ENCODE measurements at regions of chr19 and their contacts with region 1.

Region 1: DNA sequence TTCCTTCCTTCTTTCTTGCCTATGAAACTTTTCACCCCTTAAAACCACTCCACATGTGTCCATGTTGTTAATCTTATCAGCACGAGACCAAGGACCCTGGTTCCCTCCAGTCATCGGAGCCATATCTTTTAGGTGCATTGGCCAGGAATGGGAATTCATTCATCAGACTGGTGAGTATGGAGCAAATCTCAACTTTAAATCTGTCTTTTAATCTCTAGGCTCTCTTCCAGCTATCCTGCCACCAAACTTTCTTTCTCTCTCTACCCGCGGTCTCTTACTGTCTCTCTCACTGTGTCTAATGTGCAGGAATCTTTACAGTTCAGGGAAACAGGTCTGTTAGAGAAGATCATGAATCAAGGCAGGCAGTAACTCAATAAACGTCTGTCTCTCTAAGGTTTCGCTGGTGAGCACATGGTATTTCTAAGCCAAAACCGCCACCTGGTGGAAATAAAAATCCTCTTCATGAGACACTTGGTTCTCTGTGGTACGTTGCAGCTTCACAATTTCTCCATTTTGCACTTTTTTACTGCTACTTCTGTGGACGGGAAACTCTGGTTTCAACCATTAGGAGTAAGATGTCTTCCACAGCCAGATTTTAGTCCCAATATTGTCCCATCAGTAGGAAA is 16.1 kb downstream of the LGALS16 start:
- DNase-seq: peak in 8 of 9 donors; percentile 32 to 73 (median 66)
- ATAC-seq: peak; percentile 79
- H3K4me3 ChIP-seq: no peak overlapping the region
- H3K4me3 Mint-ChIP-seq: peak overlapping the region in 7 of 10 donors; percentile 29 to 64 (median 36)
- H3K27ac ChIP-seq: no peak overlapping the region
- H3K27ac Mint-ChIP-seq: peak overlapping the region in 8 of 9 donors; percentile 24 to 81 (median 60)
- H3K4me1 ChIP-seq: peaks cover 4 to 25% of the 10 kb centered on the region in 2 donors
- H3K4me1 Mint-ChIP-seq: peaks cover 8 to 41% (median 35%) of the 10 kb centered on the region in 7 donors
- H3K27me3 ChIP-seq: no peaks in the 10 kb centered on the region
- H3K27me3 Mint-ChIP-seq: peaks cover 0 to 10% (median 5%) of the 10 kb centered on the region in 5 donors

Region 2: GRCh38 chr19:39125554-39126311 is 546.1 kb before region 1 on chr19 and contains the start of gene PAK4:
- CTCF ChIA-PET with region 1: no interaction called
- POLR2A ChIA-PET with region 1: no interaction called
- intact Hi-C with region 1: loop called in 1 of 2 experiments (anchors 1 kb)
- DNase-seq: peak; percentile 89 to 99 (median 92)
- ATAC-seq: peak; percentile 99
- H3K4me3 ChIP-seq: peak within 1 kb of the TSS; percentile 61
- H3K4me3 Mint-ChIP-seq: peak within 1 kb of the TSS; percentile 90 to 98 (median 94)
- H3K27ac ChIP-seq: peak within 1 kb of the TSS; percentile 90
- H3K27ac Mint-ChIP-seq: peak within 1 kb of the TSS; percentile 92 to 99 (median 97)
- H3K4me1 ChIP-seq: peaks cover 0 to 10% of the 10 kb centered on the region in 2 donors
- H3K4me1 Mint-ChIP-seq: peaks cover 26 to 50% (median 37%) of the 10 kb centered on the region in 7 donors
- H3K27me3 ChIP-seq: no peaks in the 10 kb centered on the region
- H3K27me3 Mint-ChIP-seq: peaks cover 0 to 7% (median 0%) of the 10 kb centered on the region in 5 donors
- total RNA-seq, gene PAK4: 9.3 to 17.5 (median 12.7) TPM

Region 3: GRCh38 chr19:39435499-39436349 is 236.1 kb before region 1 on chr19 and contains the start of gene RPS16:
- CTCF ChIA-PET with region 1: interaction called, 38 read pairs
- POLR2A ChIA-PET with region 1: interaction called, 4 read pairs
- intact Hi-C with region 1: loop called (anchors 1 kb)
- DNase-seq: peak; percentile 93 to 100 (median 98)
- ATAC-seq: peak; percentile 98
- H3K4me3 ChIP-seq: peak within 1 kb of the TSS; percentile 98
- H3K4me3 Mint-ChIP-seq: peak within 1 kb of the TSS; percentile 92 to 100 (median 98)
- H3K27ac ChIP-seq: peak within 1 kb of the TSS; percentile 97
- H3K27ac Mint-ChIP-seq: peak within 1 kb of the TSS; percentile 95 to 100 (median 99)
- H3K4me1 ChIP-seq: peaks cover 27% of the 10 kb centered on the region in 2 donors
- H3K4me1 Mint-ChIP-seq: peaks cover 20 to 53% (median 40%) of the 10 kb centered on the region in 7 donors
- H3K27me3 ChIP-seq: no peaks in the 10 kb centered on the region
- H3K27me3 Mint-ChIP-seq: peaks cover 0 to 5% (median 0%) of the 10 kb centered on the region in 5 donors
- total RNA-seq, gene RPS16: 2,281 to 4,335 (median 4,063) TPM

Region 4: GRCh38 chr19:39502640-39503417 is 169.0 kb before region 1 on chr19:
- CTCF ChIA-PET with region 1: interaction called, 14 read pairs
- POLR2A ChIA-PET with region 1: no interaction called
- intact Hi-C with region 1: loop called in 1 of 2 experiments (anchors 1 kb)
- DNase-seq: peak; percentile 67 to 88 (median 78)
- ATAC-seq: peak; percentile 94
- H3K4me3 ChIP-seq: no peak overlapping the region
- H3K4me3 Mint-ChIP-seq: peak overlapping the region in 5 of 10 donors; percentile 4 to 48 (median 16)
- H3K27ac ChIP-seq: no peak overlapping the region
- H3K27ac Mint-ChIP-seq: peak overlapping the region in 3 of 9 donors; percentile 48 to 71 (median 66)
- H3K4me1 ChIP-seq: peaks cover 11 to 21% of the 10 kb centered on the region in 2 donors
- H3K4me1 Mint-ChIP-seq: peaks cover 26 to 38% (median 35%) of the 10 kb centered on the region in 7 donors
- H3K27me3 ChIP-seq: peaks cover 12 to 19% of the 10 kb centered on the region in 2 donors
- H3K27me3 Mint-ChIP-seq: peaks cover 55 to 73% (median 62%) of the 10 kb centered on the region in 5 donors

Region 5: DNA sequence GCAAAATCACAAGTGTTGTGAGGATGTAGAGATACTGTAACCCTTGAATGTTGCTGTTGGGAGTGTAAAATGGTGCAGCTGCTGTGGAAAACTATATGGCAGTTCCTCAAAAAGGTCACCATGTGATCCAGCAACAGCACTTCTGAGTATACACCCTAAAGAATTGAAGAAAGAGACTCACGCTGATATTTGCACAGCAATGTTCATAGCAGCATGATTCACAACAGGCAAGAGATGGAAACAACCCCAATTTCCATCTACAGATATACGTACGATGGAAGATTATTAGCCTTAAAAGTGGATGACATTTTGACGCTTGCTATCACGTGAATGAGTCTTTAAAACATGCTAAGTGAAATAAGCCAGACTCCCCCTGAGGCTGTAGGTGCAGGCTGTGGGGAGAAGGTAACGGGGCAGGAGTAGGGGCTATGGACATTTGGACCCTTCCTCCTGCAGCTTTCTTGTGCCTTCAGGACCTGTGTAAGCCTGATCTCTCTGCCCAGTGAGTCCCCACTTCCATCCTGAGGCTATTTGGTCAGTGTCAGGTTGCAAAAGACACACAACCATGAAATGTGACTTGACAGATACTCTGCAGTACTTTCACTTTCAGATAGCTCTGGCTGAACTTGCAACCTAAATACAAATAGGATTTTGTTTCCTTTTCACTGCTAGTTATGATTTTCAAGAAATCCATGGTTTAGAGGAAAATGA is 114.3 kb before region 1 on chr19:
- CTCF ChIA-PET with region 1: interaction called, 14 read pairs
- POLR2A ChIA-PET with region 1: interaction called, 3 read pairs
- intact Hi-C with region 1: loop called in 1 of 2 experiments (anchors 2 kb)
- DNase-seq: peak in 1 of 9 donors; percentile 16
- ATAC-seq: peak; percentile 50
- H3K4me3 ChIP-seq: peak overlapping the region; percentile 61
- H3K4me3 Mint-ChIP-seq: peak overlapping the region; percentile 48 to 89 (median 80)
- H3K27ac ChIP-seq: peak overlapping the region; percentile 64
- H3K27ac Mint-ChIP-seq: peak overlapping the region; percentile 91 to 98 (median 92)
- H3K4me1 ChIP-seq: peaks cover 10 to 18% of the 10 kb centered on the region in 2 donors
- H3K4me1 Mint-ChIP-seq: peaks cover 19 to 38% (median 31%) of the 10 kb centered on the region in 7 donors
- H3K27me3 ChIP-seq: no peaks in the 10 kb centered on the region
- H3K27me3 Mint-ChIP-seq: no peaks in the 10 kb centered on the region

Region 6: DNA sequence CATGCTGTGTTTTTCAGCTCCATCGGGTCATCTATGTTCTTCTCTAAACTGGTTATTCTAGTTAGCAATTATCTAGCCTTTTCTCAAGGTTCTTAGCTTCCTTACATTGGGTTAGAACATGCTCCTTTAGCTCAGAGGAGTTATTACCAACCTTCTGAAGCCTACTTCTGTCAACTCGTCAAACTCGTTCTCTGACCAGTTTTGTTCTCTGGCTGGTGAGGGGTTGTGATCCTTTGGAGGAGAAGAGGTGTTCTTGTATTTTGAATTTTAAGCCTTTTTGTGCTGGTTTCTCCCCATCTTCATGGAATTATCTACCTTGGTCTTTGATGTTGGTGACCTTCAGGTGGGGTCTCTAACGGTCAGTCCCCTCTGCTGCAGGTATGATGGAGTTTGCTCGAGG is 48.6 kb before region 1 on chr19:
- CTCF ChIA-PET with region 1: no interaction called
- POLR2A ChIA-PET with region 1: no interaction called
- intact Hi-C with region 1: no loop called
- DNase-seq: no peak
- ATAC-seq: no peak
- H3K4me3 ChIP-seq: no peak overlapping the region
- H3K4me3 Mint-ChIP-seq: no peak overlapping the region
- H3K27ac ChIP-seq: no peak overlapping the region
- H3K27ac Mint-ChIP-seq: no peak overlapping the region
- H3K4me1 ChIP-seq: no peaks in the 10 kb centered on the region
- H3K4me1 Mint-ChIP-seq: no peaks in the 10 kb centered on the region
- H3K27me3 ChIP-seq: peaks cover 0 to 2% of the 10 kb centered on the region in 2 donors
- H3K27me3 Mint-ChIP-seq: peaks cover 43 to 72% (median 49%) of the 10 kb centered on the region in 5 donors

Measured in naive thymus-derived CD4-positive, alpha-beta T cell (primary cell).